Posterior vena cava (tissue), 2 donors: ENCODE measurements at regions of chr5 and their contacts with region 1.

Region 1: GRCh38 chr5:125700380-125700861 is 722.8 kb upstream of the GRAMD2B start:
- DNase-seq: no peak

Region 2: DNA sequence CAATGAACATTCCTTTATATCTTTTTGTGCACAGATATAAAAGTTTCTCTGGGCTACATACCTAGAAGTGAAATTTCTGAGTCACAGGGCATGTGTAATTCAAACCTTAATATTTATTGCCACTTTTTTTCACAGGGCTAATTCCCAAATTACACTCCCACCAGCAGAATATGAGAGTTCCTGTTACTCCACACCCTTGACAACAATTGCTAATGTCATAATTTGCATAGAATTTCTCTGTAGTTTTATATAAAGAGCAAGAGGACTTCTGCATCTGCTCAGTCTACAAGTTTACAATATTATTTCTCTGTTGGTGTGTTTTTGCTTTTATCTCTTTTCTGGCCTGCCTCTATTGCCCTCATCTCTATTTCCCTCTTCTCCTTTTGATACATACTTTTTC is 1472.5 kb before region 1 on chr5:
- intact Hi-C with region 1: loop called in 1 of 2 experiments (anchors 5 kb)
- DNase-seq: no peak

Region 3: DNA sequence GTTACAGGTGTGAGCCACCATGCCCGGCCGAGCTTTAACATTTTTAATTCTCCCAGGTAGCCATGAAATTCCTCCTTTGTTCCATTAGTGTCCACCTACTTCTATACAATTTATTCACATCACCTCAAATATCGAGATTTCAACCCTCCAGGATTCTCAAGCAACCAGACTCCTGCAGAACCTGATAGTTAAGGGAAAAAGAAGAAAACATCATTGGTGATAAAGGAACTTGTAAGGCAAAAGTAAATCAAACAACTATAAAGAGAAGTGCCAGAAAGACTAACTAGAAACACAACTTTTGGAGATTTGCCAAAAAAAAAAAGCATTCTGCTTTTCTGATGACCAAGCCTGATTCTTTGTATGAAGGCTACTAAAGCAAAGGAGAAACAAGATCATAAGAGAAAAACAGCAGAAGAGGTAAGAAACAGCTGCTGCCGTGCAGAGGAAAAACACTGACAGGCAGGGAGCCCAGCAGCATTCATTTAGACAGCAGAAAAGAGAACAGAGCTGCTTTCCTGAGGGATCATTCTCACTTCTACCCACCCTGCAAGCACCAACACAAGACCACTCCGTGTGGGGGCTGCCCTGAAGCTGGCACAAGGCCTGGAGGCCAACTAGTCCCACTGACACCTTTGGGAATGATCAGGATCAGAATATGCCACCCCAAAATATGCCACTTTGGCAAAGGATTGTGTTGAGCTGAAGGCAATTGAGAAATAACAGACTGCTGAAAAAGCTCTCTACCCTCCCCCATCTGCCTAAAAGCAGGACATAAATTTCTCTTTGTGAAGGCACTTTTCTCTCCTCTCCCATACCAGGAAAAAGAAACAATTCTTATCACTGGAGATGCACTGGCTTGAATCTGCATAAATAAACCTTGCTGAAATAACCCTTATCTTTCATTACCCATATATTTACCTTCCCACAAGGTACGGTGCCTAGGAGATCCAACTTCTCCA is 819.5 kb after region 1 on chr5:
- intact Hi-C with region 1: no loop called
- DNase-seq: no peak